Posterior cingulate gyrus (tissue), 11 donors: ENCODE measurements at regions of chr7 and their contacts with region 1.

Region 1: DNA sequence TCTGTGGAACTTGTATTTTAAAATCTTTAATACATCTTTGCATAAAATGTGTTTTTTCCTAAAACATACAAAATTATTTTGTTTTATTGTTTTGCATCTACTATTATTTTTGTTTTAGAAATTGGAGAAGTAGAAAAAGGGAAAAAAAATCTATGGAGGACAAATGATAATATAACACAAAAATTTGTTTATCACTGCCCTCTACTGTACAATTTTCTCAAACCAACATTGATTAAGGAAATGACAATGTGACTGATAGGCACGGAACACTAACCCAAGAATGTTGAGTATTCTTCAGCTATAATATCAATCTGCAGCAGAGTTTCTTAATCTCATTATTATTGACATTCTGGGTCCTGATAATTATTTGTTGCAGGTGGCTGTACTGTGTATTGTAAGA is 9.5 kb upstream of the ING3 start:
- DNase-seq: no peak

Region 2: DNA sequence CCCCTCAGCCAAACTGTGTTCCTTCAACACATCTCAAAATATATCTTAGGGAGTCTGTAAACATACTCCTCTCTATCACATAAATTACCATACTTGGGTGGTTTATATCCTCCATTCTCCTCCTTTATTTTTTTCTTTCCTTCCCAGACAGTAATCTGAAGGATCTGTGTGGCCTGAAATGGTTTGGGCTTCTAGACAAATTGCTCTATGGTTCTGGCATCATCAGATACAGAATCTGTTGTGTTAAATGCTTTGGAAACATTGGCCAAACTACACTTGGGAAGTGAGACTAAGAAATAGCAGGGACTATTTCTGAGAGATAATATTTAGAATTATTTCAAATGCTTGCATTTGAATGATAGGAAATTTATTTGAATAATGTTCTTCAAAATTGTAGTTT is 1021.1 kb before region 1 on chr7:
- intact Hi-C with region 1: no loop called
- DNase-seq: no peak

Region 3: DNA sequence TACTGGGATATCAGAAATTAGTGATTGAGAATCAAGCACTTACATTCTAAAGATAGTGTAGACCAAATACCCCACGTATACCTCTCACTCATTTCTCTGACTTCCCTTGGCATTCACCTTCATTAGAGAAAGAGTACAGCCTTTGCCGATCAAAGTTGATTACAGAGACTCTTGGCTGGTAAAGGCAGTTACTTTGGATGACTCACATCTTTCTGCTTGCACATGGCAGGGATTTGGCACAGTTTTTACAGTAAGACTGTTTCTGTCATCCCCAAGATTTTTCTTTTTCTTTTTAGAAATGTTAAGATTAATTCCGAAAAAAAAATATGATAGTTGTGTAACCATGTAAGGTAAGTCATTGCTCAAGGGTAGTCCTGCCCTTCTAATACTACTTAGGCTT is 226.1 kb before region 1 on chr7:
- intact Hi-C with region 1: no loop called
- DNase-seq: no peak

Region 4: GRCh38 chr7:120792091-120792860 is 148.8 kb before region 1 on chr7:
- intact Hi-C with region 1: loop called (anchors 5 kb)
- DNase-seq: peak; percentile 31 to 92 (median 68)

Region 5: DNA sequence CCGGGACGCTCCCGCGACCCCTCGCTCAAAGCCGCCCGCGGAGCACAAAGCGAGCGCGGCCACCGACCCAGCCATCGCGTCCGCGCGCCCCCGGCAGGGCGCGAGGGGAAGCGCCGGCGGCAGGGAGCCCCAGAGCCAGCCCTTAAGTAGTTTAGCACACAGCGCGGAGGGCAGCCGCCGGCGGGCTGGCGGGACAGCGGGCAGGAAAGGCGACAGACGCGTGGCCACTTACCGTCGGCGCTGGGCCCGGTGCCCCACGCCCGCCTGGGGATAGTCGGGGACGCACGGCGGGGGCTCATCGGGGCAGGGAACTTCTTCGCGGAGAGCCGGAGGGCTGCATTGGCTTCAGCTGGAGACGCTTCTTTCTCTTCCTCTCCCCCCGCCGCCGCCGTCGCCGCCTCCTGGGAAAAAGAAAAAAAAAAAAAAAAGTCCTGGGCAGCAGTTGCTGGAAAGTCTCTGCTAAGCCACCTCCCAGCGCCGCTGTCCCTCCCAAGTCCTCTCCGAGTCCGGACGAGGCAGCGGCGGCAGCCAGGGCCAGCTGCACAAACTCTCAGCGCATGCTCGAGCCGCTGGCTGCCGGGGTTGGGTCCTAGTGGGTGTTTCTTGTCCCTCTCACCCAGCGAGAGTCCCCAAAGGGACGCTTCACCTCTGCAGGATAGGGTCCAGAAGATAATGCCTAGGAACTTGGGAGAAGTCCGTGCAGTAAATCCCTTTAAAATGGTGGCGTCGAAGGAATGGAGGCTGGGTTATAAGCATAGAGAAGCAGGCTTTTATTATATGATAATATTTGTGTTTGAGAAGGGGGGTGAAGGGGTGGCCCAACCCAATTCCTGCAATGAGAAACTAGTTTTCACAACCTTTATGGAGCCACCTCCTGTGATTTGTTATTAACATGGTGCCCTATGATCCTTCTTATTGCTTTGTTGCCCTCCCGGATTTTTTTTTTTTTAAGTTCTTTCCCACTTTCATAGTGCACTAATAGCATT is 83.2 kb before region 1 on chr7 and contains the start of gene TSPAN12:
- intact Hi-C with region 1: no loop called
- DNase-seq: peak; percentile 30 to 93 (median 49)

Region 6: GRCh38 chr7:121020652-121021051 is 79.6 kb after region 1 on chr7:
- intact Hi-C with region 1: no loop called
- DNase-seq: no peak